Uterus (tissue), 4 donors: ENCODE measurements at regions of chr19 and their contacts with region 1.

Region 1: GRCh38 chr19:47247329-47247886 is 8.9 kb upstream of the CCDC9 start:
- DNase-seq: peak; percentile 77 to 81
- H3K4me3 ChIP-seq: no peak overlapping the region
- H3K27ac ChIP-seq: no peak overlapping the region
- H3K4me1 ChIP-seq: peaks cover 0 to 4% of the 10 kb centered on the region in 2 donors
- H3K27me3 ChIP-seq: no peaks in the 10 kb centered on the region
- CTCF ChIP-seq: peak; percentile 83 to 92 (median 85)
- POLR2A ChIP-seq: no peak

Region 2: GRCh38 chr19:47145639-47146486 is 101.5 kb before region 1 on chr19:
- intact Hi-C with region 1: loop called (anchors 5 kb)
- DNase-seq: no peak
- H3K4me3 ChIP-seq: no peak overlapping the region
- H3K27ac ChIP-seq: no peak overlapping the region
- H3K4me1 ChIP-seq: no peaks in the 10 kb centered on the region
- H3K27me3 ChIP-seq: no peaks in the 10 kb centered on the region
- CTCF ChIP-seq: no peak
- POLR2A ChIP-seq: no peak

Region 3: GRCh38 chr19:47210689-47211316 is 36.6 kb before region 1 on chr19:
- intact Hi-C with region 1: no loop called
- DNase-seq: peak; percentile 77 to 90
- H3K4me3 ChIP-seq: no peak overlapping the region
- H3K27ac ChIP-seq: peak overlapping the region; percentile 70 to 81
- H3K4me1 ChIP-seq: no peaks in the 10 kb centered on the region
- H3K27me3 ChIP-seq: no peaks in the 10 kb centered on the region
- CTCF ChIP-seq: peak; percentile 83 to 94 (median 89)
- POLR2A ChIP-seq: no peak

Region 4: GRCh38 chr19:47284324-47284899 is 37.0 kb after region 1 on chr19:
- intact Hi-C with region 1: no loop called
- DNase-seq: peak in 1 of 2 donors; percentile 33
- H3K4me3 ChIP-seq: no peak overlapping the region
- H3K27ac ChIP-seq: no peak overlapping the region
- H3K4me1 ChIP-seq: no peaks in the 10 kb centered on the region
- H3K27me3 ChIP-seq: no peaks in the 10 kb centered on the region
- CTCF ChIP-seq: peak; percentile 74 to 91 (median 86)
- POLR2A ChIP-seq: no peak

Region 5: GRCh38 chr19:47296036-47296435 is 48.6 kb after region 1 on chr19:
- intact Hi-C with region 1: no loop called
- DNase-seq: peak; percentile 53 to 81
- H3K4me3 ChIP-seq: no peak overlapping the region
- H3K27ac ChIP-seq: no peak overlapping the region
- H3K4me1 ChIP-seq: no peaks in the 10 kb centered on the region
- H3K27me3 ChIP-seq: no peaks in the 10 kb centered on the region
- CTCF ChIP-seq: peak; percentile 56 to 66 (median 60)
- POLR2A ChIP-seq: no peak

Region 6: DNA sequence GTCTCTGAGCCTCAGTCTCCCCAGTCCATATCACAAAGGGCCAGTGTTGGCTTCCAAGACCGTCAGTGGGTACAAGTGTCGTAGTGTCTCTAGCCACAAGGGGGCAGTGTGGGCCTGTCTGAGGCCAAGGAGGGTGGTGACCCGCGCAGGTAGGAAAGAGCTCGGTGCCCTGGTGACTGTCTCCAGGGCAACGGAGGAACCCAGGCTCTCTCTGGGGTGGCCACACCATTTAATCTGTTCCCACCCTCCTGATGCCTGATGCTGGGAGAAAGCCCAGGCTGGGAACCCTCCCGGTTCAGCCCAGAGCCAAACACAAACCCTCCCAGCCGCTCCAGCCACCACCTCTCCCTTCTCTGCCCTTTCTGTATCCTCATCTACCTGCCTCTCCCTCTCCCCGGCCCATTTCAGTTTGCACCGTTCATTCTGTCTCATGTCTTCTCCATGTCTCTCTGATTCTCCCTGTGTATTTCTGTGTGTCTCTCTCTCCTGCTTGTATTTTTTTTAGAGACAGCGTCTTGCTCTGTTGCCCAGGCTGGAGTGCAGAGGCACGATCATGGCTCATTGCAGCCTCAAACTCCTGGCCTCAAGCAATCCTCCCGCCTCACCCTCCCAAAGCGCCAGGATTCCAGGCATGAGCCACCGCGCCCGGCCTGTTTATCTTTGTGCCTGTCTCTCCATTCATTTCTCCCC is 189.4 kb after region 1 on chr19:
- intact Hi-C with region 1: no loop called
- DNase-seq: peak; percentile 76 to 82
- H3K4me3 ChIP-seq: no peak overlapping the region
- H3K27ac ChIP-seq: no peak overlapping the region
- H3K4me1 ChIP-seq: no peaks in the 10 kb centered on the region
- H3K27me3 ChIP-seq: no peaks in the 10 kb centered on the region
- CTCF ChIP-seq: peak; percentile 89 to 96 (median 94)
- POLR2A ChIP-seq: no peak